Endothelial cell of umbilical vein (primary cell): ENCODE measurements at regions of chr22 and their contacts with region 1.

Region 1: GRCh38 chr22:25772288-25772687 is 30.3 kb downstream of the MYO18B start:
- DNase-seq: no peak
- H3K4me3 ChIP-seq: no peak overlapping the region
- H3K27ac ChIP-seq: no peak overlapping the region
- H3K4me1 ChIP-seq: no peaks in the 10 kb centered on the region
- H3K27me3 ChIP-seq: no peaks in the 10 kb centered on the region
- CTCF ChIP-seq: no peak
- POLR2A ChIP-seq: no peak

Region 2: DNA sequence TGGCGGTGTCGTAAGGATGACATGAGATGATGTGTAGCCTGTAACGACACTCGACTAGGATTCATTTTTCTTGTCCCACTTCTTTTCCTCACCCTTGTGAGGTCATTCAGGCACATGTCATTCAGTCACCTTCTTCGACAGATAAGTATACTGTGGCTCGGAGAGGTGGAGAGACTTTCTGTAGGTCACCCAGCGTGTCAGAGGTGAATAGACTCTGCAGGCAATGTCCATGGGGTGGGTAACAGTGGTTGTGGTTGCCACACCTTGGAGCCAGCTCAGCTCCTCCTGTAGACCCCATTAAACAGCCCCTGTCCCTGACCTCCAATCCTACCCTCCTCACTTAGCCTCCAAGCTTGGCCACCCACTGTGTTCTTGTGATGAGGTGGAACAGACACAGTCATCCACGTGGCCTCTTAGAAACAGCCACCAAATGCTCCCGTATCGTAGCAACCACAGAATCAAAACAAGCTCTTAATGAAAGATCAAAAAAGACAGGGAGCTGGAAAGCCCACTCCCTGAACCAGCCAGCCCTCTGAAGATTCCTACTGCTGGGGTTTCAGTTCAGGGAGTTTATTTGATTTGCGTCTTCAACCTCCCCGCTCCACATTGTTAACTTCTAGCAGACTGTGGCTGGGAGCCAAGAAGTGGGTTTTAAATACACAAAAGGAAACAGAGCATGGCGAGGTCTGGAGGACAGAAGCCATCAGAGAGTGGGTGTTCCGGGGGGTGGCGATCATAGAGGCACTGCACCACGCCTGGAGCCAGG is 296.8 kb before region 1 on chr22:
- CTCF ChIA-PET with region 1: interaction called, 12 read pairs
- POLR2A ChIA-PET with region 1: no interaction called
- dilution Hi-C with region 1: no loop called
- intact Hi-C with region 1: loop called (anchors 5 kb)
- DNase-seq: peak; percentile 89
- H3K4me3 ChIP-seq: no peak overlapping the region
- H3K27ac ChIP-seq: peak overlapping the region; percentile 23
- H3K4me1 ChIP-seq: peaks cover 10% of the 10 kb centered on the region
- H3K27me3 ChIP-seq: no peaks in the 10 kb centered on the region
- CTCF ChIP-seq: no peak
- POLR2A ChIP-seq: no peak

Region 3: GRCh38 chr22:25702040-25702439 is 70.2 kb before region 1 on chr22:
- CTCF ChIA-PET with region 1: interaction called, 23 read pairs
- POLR2A ChIA-PET with region 1: no interaction called
- dilution Hi-C with region 1: no loop called
- intact Hi-C with region 1: loop called (anchors 2 kb)
- DNase-seq: peak; percentile 29
- H3K4me3 ChIP-seq: no peak overlapping the region
- H3K27ac ChIP-seq: no peak overlapping the region
- H3K4me1 ChIP-seq: no peaks in the 10 kb centered on the region
- H3K27me3 ChIP-seq: no peaks in the 10 kb centered on the region
- CTCF ChIP-seq: no peak
- POLR2A ChIP-seq: no peak

Region 4: DNA sequence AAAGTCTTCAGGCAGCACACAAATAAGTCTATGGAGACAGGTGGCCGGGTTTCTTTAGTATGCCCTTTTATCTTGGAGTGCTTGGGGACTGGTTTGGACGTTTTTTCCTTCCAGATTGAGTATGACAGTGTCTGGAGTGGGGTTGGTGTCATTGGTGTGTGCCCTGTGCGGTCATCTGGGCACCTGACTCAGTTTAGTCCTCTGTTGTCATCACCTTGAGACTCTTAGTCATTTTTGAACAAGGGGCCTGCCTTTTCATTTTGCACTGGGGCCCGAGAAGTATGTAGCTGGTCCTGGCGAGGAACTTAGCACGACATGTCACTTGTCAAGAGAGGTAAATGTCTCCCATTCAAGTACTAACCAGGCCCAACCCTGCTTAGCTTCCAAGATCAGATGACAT is 57.5 kb before region 1 on chr22:
- CTCF ChIA-PET with region 1: interaction called, 14 read pairs
- POLR2A ChIA-PET with region 1: no interaction called
- dilution Hi-C with region 1: no loop called
- intact Hi-C with region 1: no loop called
- DNase-seq: no peak
- H3K4me3 ChIP-seq: no peak overlapping the region
- H3K27ac ChIP-seq: no peak overlapping the region
- H3K4me1 ChIP-seq: no peaks in the 10 kb centered on the region
- H3K27me3 ChIP-seq: no peaks in the 10 kb centered on the region
- CTCF ChIP-seq: no peak
- POLR2A ChIP-seq: no peak

Region 5: DNA sequence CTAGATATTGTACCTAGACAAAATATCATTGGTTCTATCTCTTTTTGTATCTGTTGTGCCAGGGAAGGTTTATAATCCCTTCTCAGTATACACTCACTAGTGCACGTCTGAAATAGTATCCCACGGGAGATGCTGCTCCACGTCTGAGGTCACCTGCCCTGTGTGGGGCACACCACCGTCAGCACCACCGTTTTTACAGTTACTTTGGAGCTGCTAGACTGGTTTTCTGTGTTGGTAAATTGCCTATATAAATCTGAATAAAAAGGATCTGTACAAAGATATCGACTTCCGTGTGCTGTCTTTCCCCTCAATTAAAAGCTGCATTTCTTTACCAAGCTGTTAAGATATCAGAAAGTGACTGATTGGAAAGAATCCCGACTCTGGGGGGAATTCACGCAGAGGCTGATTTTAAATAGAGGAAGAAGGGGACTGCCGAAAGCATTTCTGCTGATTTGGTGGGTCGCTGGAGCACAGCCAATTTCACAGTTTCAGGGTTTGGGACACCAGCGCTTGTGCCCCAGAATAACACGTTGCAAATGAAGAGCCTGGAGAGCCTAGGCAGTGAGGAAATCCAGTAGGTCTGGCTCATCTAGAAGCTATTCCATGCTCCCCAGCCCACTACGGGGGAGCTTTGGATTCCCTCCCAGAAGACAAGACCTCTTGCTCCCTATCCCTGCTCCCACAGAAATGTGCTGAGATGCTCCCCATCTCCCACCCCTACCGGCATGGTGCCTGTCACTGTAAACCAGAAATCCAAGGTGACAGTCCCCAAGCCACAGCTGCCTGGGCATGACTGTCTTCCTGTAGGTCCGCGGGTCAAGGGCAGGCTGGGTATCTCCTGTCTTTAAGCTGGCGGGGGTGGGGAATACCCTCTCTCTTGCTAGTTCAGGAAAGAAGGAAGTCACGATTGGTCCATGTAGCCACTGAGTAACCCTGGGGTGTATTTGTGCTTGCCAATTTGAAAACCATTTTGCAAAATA is 43.0 kb before region 1 on chr22:
- CTCF ChIA-PET with region 1: interaction called, 11 read pairs
- POLR2A ChIA-PET with region 1: no interaction called
- dilution Hi-C with region 1: no loop called
- intact Hi-C with region 1: no loop called
- DNase-seq: no peak
- H3K4me3 ChIP-seq: no peak overlapping the region
- H3K27ac ChIP-seq: no peak overlapping the region
- H3K4me1 ChIP-seq: no peaks in the 10 kb centered on the region
- H3K27me3 ChIP-seq: no peaks in the 10 kb centered on the region
- CTCF ChIP-seq: no peak
- POLR2A ChIP-seq: no peak